Calu3 (cell line): ENCODE measurements at regions of chr3 and their contacts with region 1.

Region 1: DNA sequence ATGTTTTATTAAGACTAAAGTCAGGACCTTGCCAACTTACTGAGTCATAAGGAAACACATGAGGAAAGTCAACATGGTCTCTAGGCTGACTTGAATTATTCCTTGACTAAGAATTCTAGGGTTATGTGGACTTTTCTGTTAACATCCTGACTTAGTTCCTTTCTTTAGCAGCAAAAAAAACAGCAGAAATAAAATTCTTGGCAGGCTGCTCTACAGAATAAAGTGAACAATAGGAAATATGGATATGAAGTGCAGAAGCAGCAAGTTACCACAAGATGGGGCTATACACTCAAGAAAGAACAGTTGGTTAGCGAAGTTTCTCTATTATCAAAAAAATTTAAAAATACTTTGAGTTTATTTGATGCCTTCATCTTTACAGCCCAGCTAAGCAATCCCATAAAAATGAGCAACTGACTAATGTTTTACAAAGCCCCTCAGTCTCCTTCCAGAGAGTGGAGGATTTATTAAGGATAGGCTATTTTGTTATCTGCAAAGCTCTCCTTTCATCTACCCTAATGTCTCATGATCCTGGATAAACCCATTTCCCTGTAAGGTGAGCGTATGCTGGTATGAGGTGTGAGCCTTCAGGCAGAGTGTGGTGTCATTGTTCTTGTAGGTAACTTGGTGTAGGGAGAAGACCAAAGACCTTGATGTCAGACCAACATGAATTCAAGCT is 23.1 kb upstream of the MCCC1 start:
- DNase-seq: no peak
- H3K4me3 Mint-ChIP-seq: no peak overlapping the region
- H3K27ac Mint-ChIP-seq: no peak overlapping the region
- H3K4me1 Mint-ChIP-seq: peaks cover 25% of the 10 kb centered on the region
- H3K27me3 Mint-ChIP-seq: peaks cover 13% of the 10 kb centered on the region
- CTCF ChIP-seq: peak; percentile 86

Region 2: DNA sequence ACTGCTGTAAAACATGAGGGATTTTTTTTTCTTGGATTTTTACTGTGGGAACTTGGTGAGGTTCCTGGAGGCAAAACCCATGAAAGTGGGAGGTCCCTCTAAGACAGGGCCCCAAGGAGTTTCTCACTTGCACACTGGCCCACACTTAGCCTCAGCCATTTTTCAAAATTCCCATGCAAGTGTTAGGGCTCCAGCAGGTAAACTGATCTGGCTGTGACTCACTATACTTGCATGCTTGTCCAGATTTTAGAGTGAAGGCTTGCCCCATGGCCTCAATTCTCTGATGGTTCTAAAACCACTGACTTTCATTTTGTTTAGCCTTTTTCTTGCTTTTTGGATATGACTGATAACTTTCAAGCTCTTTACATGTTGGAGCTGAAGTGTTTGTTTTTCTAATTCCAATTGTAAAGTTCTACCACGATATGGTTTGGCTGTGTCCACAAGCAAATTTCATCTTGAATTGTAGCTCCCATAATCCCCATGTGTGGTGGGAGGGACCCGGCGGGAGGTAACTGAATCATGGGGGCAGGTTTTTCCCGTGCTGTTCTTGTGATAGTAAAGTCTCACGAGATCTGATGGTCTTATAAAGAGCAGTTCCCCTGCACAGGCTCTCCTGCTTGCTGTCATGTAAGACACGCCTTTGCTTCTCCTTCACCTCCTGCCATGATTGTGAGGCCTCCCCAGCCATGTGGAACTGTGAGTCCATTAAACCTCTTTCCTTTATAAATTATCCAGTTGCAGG is 60.8 kb before region 1 on chr3:
- CTCF ChIA-PET with region 1: no interaction called
- intact Hi-C with region 1: no loop called
- DNase-seq: no peak
- H3K4me3 Mint-ChIP-seq: no peak overlapping the region
- H3K27ac Mint-ChIP-seq: no peak overlapping the region
- H3K4me1 Mint-ChIP-seq: no peaks in the 10 kb centered on the region
- H3K27me3 Mint-ChIP-seq: no peaks in the 10 kb centered on the region
- CTCF ChIP-seq: no peak

Region 3: DNA sequence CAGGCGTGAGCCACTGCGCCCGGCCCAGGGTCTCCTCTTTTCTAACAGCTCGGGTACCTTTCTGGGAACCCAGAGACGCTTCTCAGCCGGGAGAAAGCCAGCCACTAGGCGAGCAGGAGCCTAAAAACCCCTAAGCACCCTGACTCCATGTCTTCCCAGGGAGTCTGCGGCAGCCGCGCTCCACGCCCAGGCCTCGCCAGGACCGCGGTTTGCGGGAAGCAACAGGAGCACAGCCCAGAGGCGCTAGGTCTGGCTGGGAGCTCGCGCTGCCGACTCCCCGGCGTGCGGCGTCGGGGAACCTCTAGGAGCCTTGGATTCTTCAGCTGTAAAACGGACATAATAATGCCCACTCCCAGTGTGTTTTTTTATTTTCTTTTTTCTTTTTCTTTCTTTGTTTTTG is 41.2 kb after region 1 on chr3:
- CTCF ChIA-PET with region 1: interaction called, 3 read pairs
- intact Hi-C with region 1: loop called (anchors 1 kb)
- DNase-seq: no peak
- H3K4me3 Mint-ChIP-seq: peak overlapping the region; percentile 84
- H3K27ac Mint-ChIP-seq: no peak overlapping the region
- H3K4me1 Mint-ChIP-seq: peaks cover 21% of the 10 kb centered on the region
- H3K27me3 Mint-ChIP-seq: peaks cover 3% of the 10 kb centered on the region
- CTCF ChIP-seq: no peak

Region 4: DNA sequence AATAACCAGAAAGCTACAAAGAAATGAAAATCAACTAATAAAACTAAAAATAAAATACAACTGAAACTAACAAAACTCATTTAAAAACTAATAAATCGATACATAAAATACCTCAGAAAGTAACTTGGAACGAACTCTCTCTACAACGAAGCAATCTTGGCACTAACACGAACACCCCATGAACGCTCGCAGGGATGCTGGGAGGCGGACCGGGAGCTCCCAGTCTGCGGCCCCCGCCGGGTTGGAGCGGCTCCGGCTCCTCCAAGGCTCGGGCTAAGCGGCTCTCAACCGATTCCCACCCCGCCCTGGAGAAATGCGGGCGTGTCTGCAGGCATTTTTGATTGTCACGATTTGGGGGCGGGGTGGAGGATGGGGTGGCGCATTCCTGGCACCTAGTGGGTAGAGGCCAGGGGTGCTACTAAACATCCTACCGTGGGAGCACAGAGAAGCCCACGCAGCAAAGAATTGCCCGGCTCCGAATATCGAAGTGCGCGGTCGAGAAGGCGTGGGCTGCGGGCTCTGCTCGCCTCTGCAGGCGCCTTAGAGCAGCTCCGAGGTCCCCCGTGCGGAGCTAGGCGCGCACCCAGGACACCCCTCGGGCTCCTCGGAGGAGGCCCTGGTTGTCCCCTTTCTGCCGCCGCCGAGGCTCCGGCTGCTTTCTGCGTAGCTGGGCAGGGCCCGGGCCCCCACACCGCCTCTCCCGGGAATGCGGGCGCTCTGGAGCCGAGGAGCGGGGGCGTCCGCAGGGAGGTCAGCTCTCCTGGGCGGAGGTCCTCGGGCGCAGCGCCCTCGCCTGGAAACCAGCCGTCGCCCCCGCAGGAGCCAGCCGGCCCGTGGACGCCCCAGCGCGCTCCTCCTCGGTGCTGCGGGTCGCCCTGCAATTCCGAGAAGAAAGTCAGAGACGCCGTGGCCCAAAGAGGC is 56.5 kb after region 1 on chr3:
- CTCF ChIA-PET with region 1: interaction called, 14 read pairs
- intact Hi-C with region 1: loop called (anchors 1 kb)
- DNase-seq: peak; percentile 75
- H3K4me3 Mint-ChIP-seq: peak overlapping the region; percentile 69
- H3K27ac Mint-ChIP-seq: no peak overlapping the region
- H3K4me1 Mint-ChIP-seq: peaks cover 15% of the 10 kb centered on the region
- H3K27me3 Mint-ChIP-seq: peaks cover 57% of the 10 kb centered on the region
- CTCF ChIP-seq: no peak

Region 5: DNA sequence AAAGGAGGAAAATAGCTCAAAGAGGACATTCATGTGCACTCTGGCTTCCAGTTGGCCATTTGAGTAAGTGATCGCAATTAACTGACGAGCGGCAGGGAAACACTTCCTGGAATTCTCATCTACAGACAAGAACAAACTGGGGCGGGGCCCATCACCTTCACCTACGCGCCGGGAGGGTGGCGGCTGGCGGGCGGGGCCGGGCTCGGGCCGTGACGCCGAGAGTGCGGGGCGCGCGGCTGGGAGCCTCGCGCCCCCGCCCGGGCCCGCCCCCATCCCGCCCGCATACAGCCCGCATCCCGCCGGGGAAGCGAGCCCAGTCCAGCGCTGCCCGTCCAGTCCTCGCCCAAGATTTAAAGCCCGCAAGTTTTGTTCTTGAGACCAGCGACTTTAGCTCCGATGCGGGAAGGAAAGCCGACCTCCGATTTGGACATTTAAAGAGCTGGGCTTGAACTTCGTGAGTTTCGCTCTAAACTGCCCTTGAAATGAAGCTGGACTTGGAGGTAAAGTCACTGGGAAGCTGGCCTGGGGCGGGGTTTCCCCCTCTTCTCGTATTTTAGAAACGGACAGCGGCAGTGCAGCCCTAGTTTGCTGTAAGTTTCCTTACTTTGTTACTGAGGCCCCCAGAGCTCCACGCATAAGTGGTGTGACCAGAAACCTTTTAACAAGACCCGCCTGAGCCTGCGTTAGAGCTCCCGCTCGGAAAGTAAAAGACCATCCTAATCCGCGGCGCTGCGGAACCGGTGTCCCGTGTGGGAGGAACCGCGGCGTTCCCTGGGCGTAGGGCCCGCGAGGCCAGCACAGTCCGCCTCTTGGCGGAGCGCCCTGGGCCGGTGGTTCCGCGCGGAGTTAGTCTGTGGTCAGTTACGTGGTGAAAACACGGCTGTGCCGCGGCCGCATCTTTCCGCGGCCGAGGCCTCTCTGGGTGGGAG is 130.8 kb after region 1 on chr3 and contains the start of gene B3GNT5:
- CTCF ChIA-PET with region 1: no interaction called
- intact Hi-C with region 1: loop called (anchors 10 kb)
- DNase-seq: peak; percentile 91
- H3K4me3 Mint-ChIP-seq: peak within 1 kb of the TSS; percentile 84
- H3K27ac Mint-ChIP-seq: peak within 1 kb of the TSS; percentile 55
- H3K4me1 Mint-ChIP-seq: peaks cover 30% of the 10 kb centered on the region
- H3K27me3 Mint-ChIP-seq: no peaks in the 10 kb centered on the region
- CTCF ChIP-seq: no peak
- total RNA-seq, gene B3GNT5: 42.9 and 43.6 TPM in 2 replicates